Activated naive CD8-positive, alpha-beta T cell treated with anti-CD3 and anti-CD28 coated beads, Interleukin-2, amount 10 ng/mL, durations not matched to agents 7 days and 5 days (primary cell): ENCODE measurements at regions of chrX and their contacts with region 1.

Region 1: GRCh38 chrX:13734278-13735172 is at the starts of genes OFD1 and TRAPPC2:
- DNase-seq: peak; percentile 88
- ATAC-seq: peak; percentile 98
- H3K4me3 Mint-ChIP-seq: peak within 1 kb of the TSS; percentile 99
- H3K27ac Mint-ChIP-seq: peak within 1 kb of the TSS; percentile 97
- H3K4me1 Mint-ChIP-seq: peaks cover 23% of the 10 kb centered on the region
- H3K27me3 Mint-ChIP-seq: no peaks in the 10 kb centered on the region
- total RNA-seq, gene OFD1: 84.9 to 86.1 TPM
- total RNA-seq, gene TRAPPC2: 29.9 to 33.0 TPM

Region 2: GRCh38 chrX:13653022-13653693 is 81.4 kb before region 1 on chrX and contains the start of gene TCEANC:
- POLR2A ChIA-PET with region 1: interaction called, 12 read pairs
- DNase-seq: peak; percentile 89
- ATAC-seq: peak; percentile 98
- H3K4me3 Mint-ChIP-seq: peak within 1 kb of the TSS; percentile 86
- H3K27ac Mint-ChIP-seq: peak within 1 kb of the TSS; percentile 92
- H3K4me1 Mint-ChIP-seq: peaks cover 10% of the 10 kb centered on the region
- H3K27me3 Mint-ChIP-seq: no peaks in the 10 kb centered on the region
- total RNA-seq, gene TCEANC: 6.2 TPM

Region 3: GRCh38 chrX:13688958-13689740 is 45.4 kb before region 1 on chrX and contains the start of gene RAB9A:
- POLR2A ChIA-PET with region 1: interaction called, 21 read pairs
- DNase-seq: peak; percentile 83
- ATAC-seq: peak; percentile 91
- H3K4me3 Mint-ChIP-seq: peak within 1 kb of the TSS; percentile 89
- H3K27ac Mint-ChIP-seq: peak within 1 kb of the TSS; percentile 89
- H3K4me1 Mint-ChIP-seq: peaks cover 29% of the 10 kb centered on the region
- H3K27me3 Mint-ChIP-seq: no peaks in the 10 kb centered on the region
- total RNA-seq, gene RAB9A: 13.4 to 18.3 TPM

Region 4: DNA sequence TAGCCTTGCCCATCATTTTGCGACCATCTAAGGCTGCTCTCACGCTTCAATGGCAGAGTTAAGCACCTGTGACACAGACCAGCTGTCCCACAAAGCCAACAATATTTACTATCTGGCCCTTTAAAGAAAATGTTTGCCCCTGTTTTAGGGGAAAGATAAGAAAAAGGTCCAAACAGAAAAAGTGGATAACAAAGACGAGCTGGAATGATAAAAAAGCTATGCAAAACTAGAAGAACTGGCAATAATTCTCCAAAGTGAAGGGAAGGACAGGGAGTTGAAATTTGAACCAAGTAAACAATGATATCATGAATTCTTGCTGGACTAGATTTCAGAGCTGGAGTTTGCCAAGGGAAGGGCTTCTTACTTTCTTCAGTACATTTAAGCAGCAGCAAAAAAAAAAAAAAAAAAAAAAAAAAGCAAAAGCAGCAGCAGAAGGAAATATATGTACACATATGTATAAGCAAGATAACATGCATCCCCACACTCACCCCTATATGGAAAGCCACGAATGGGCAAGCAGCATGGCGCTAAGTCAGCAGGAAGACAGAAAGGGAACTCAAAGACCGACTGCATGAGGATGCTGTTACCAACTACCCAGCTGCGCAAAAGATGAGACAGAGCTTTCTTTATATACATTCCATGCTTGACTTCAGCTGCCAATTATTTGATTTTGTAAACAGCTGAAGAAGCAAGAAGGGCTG is 12.6 kb before region 1 on chrX:
- POLR2A ChIA-PET with region 1: interaction called, 10 read pairs
- DNase-seq: no peak
- ATAC-seq: no peak
- H3K4me3 Mint-ChIP-seq: no peak overlapping the region
- H3K27ac Mint-ChIP-seq: peak overlapping the region; percentile 48
- H3K4me1 Mint-ChIP-seq: peaks cover 32% of the 10 kb centered on the region
- H3K27me3 Mint-ChIP-seq: no peaks in the 10 kb centered on the region

Region 5: DNA sequence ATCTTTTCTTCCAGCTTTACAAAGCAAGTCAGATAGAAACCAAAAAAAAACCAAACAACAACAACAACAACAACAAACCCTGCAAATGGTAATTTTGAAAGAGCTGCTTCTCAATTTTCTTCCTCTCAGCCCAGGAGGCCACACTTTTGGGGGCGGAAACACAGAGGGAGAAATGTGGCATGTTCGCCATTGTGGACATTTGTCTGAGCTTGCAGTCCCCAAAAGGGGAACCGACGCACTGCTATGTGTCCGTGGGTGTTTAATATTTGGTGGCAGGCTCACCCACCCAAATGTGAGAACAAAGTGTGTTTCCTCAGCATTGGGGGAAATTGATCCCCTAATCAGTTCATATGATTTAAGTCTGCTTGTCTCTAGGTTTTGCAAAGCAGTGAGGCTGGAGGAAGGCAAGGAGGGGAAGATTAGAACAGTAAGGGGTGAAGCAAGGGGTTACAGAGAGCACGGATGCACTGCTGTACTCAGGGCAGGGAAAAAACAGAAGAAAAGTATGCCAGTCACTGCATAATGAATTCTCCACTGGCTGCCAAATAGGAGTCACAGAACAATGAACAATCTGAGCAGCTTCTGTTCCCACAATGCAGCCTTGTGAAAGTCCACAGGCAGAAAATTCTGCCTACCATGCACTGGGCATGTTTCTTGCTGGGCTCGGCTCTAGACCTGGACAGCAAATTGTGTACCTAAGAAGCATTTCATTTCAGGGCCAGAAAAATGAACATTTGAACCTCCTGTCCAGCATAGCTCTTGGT is 157.0 kb after region 1 on chrX:
- POLR2A ChIA-PET with region 1: no interaction called
- DNase-seq: no peak
- ATAC-seq: no peak
- H3K4me3 Mint-ChIP-seq: no peak overlapping the region
- H3K27ac Mint-ChIP-seq: no peak overlapping the region
- H3K4me1 Mint-ChIP-seq: no peaks in the 10 kb centered on the region
- H3K27me3 Mint-ChIP-seq: peaks cover 7% of the 10 kb centered on the region

Region 6: GRCh38 chrX:13966071-13966792 is 231.7 kb after region 1 on chrX:
- POLR2A ChIA-PET with region 1: no interaction called
- DNase-seq: no peak
- ATAC-seq: no peak
- H3K4me3 Mint-ChIP-seq: no peak overlapping the region
- H3K27ac Mint-ChIP-seq: no peak overlapping the region
- H3K4me1 Mint-ChIP-seq: no peaks in the 10 kb centered on the region
- H3K27me3 Mint-ChIP-seq: no peaks in the 10 kb centered on the region